Activated T-helper 1 cell treated with anti-CD3 and anti-CD28 coated beads, Interleukin-12 subunit alpha, Interleukin-12 subunit beta, Interleukin-2, Interleukin-4 antibody, amounts not matched to agents 30 ng/mL and 10 ng/mL and 1 ng/mL, durations not matched to agents 14 hours and 24 hours and 36 hours (primary cell): ENCODE measurements at regions of chr18 and their contacts with region 1.

Region 1: DNA sequence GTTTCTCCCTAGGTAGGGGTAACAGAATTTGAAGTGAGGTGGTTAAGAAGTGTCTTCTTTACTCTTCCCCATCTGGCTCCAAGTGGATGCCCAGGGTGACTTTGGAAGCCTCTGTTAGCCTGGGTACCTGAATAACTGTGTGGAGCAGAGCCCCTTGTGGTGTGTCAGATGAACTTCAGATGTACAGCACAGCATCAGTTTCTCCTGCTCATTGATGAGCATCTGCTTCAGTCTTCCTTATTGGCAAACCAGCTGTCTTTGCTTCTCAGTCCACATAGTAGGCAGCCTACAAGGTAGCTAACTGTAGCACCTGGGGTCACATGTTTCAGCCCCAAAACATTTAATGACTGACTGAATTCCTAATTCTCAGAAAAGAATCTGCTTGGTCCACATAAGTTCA is 56.2 kb upstream of the ATP8B1 start:
- DNase-seq: no peak
- H3K4me3 Mint-ChIP-seq: no peak overlapping the region
- H3K27ac Mint-ChIP-seq: no peak overlapping the region
- H3K4me1 Mint-ChIP-seq: no peaks in the 10 kb centered on the region
- H3K27me3 Mint-ChIP-seq: peaks cover 15% of the 10 kb centered on the region

Region 2: DNA sequence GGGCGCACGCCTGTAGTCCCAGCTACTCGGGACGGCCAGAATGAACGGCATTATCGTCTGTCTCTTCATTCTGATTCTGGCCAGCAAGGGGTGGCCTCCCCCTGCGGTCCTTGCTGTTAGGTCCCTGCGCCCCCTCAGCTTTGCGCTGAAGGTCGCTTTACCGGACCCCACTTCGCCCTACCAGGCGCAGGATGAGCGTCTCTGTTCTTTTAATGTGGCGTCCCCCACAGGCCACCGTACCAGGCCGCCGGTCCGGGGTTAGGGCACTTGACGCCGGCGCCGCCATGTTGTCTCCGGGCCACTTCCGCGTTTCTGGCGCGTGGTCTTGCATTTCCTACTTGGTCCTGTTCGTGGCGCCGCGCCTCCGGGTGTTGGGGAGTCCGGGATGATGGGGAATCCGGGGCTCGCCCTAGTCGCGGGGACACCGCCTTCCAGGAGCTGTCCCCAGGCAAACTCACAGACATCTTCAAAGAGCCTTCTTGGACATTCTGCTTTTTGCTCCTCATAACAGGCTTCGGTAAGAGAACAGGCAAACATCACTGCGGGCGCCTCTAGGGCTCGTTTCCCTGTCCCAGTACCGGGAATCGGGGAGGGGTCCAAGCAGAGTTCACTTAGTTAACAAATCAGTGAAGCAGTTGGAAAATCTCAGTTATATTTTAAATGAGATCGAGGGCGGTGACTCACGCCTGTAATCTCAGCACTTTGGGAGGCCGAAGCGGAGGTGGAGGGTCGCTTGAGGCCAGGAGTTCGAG is 229.1 kb before region 1 on chr18:
- intact Hi-C with region 1: loop called (anchors 1 kb)
- DNase-seq: peak; percentile 89
- H3K4me3 Mint-ChIP-seq: peak overlapping the region; percentile 96
- H3K27ac Mint-ChIP-seq: peak overlapping the region; percentile 94
- H3K4me1 Mint-ChIP-seq: peaks cover 9% of the 10 kb centered on the region
- H3K27me3 Mint-ChIP-seq: no peaks in the 10 kb centered on the region

Region 3: DNA sequence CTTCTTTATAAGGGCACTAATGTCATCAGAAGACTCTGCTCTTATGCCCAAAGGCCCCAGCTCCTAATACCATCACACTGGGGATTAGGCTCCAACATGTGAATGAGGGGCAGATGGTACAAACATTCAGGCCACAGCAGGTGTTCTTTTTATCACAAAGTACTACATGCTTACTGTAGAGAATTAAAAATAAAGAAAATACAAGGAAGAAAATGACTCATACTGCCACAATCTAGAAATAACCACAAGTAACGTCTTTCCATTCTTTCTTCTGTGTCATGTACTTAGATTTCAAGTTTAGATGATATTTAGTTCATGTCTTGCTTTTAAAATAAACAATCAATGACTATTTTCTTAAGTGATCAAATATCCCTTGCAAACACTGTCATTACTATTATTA is 84.4 kb after region 1 on chr18:
- intact Hi-C with region 1: no loop called
- DNase-seq: no peak
- H3K4me3 Mint-ChIP-seq: no peak overlapping the region
- H3K27ac Mint-ChIP-seq: no peak overlapping the region
- H3K4me1 Mint-ChIP-seq: no peaks in the 10 kb centered on the region
- H3K27me3 Mint-ChIP-seq: peaks cover 8% of the 10 kb centered on the region

Region 4: GRCh38 chr18:58493516-58494253 is 634.4 kb after region 1 on chr18:
- intact Hi-C with region 1: no loop called
- DNase-seq: peak; percentile 57
- H3K4me3 Mint-ChIP-seq: no peak overlapping the region
- H3K27ac Mint-ChIP-seq: no peak overlapping the region
- H3K4me1 Mint-ChIP-seq: peaks cover 12% of the 10 kb centered on the region
- H3K27me3 Mint-ChIP-seq: peaks cover 39% of the 10 kb centered on the region